Mammary epithelial cell (primary cell): ENCODE measurements at regions of chr12 and their contacts with region 1.

Region 1: GRCh38 chr12:50103767-50104321 is at the start of gene GPD1:
- DNase-seq: peak; percentile 62
- H3K4me3 ChIP-seq: no peak within 1 kb of the TSS
- H3K27ac ChIP-seq: no peak within 1 kb of the TSS
- H3K4me1 ChIP-seq: peaks cover 21% of the 10 kb centered on the region
- H3K27me3 ChIP-seq: no peaks in the 10 kb centered on the region
- CTCF ChIP-seq: no peak
- total RNA-seq, gene GPD1: 0.73 to 1.2 TPM

Region 2: GRCh38 chr12:50066433-50066832 is 37.4 kb before region 1 on chr12:
- CTCF ChIA-PET with region 1: no interaction called
- dilution Hi-C with region 1: loop called (anchors 5 kb)
- in situ Hi-C with region 1: no loop called
- intact Hi-C with region 1: no loop called
- DNase-seq: peak; percentile 37
- H3K4me3 ChIP-seq: no peak overlapping the region
- H3K27ac ChIP-seq: no peak overlapping the region
- H3K4me1 ChIP-seq: peaks cover 14% of the 10 kb centered on the region
- H3K27me3 ChIP-seq: no peaks in the 10 kb centered on the region
- CTCF ChIP-seq: no peak

Region 3: GRCh38 chr12:50142993-50143392 is 39.1 kb after region 1 on chr12:
- CTCF ChIA-PET with region 1: no interaction called
- dilution Hi-C with region 1: no loop called
- in situ Hi-C with region 1: no loop called
- intact Hi-C with region 1: no loop called
- DNase-seq: no peak
- H3K4me3 ChIP-seq: no peak overlapping the region
- H3K27ac ChIP-seq: no peak overlapping the region
- H3K4me1 ChIP-seq: no peaks in the 10 kb centered on the region
- H3K27me3 ChIP-seq: no peaks in the 10 kb centered on the region
- CTCF ChIP-seq: no peak

Region 4: GRCh38 chr12:50187084-50187900 is 83.4 kb after region 1 on chr12:
- CTCF ChIA-PET with region 1: no interaction called
- dilution Hi-C with region 1: loop called (anchors 5 kb)
- in situ Hi-C with region 1: no loop called
- intact Hi-C with region 1: no loop called
- DNase-seq: peak; percentile 26
- H3K4me3 ChIP-seq: no peak overlapping the region
- H3K27ac ChIP-seq: peak overlapping the region; percentile 62
- H3K4me1 ChIP-seq: peaks cover 45% of the 10 kb centered on the region
- H3K27me3 ChIP-seq: no peaks in the 10 kb centered on the region
- CTCF ChIP-seq: no peak